Activated T-helper 1 cell treated with anti-CD3 and anti-CD28 coated beads, Interleukin-12 subunit alpha, Interleukin-12 subunit beta, Interleukin-2, Interleukin-4 antibody, amounts not matched to agents 30 ng/mL and 10 ng/mL and 1 ng/mL, durations not matched to agents 14 hours and 24 hours and 36 hours (primary cell): ENCODE measurements at regions of chr13 and their contacts with region 1.

Region 1: DNA sequence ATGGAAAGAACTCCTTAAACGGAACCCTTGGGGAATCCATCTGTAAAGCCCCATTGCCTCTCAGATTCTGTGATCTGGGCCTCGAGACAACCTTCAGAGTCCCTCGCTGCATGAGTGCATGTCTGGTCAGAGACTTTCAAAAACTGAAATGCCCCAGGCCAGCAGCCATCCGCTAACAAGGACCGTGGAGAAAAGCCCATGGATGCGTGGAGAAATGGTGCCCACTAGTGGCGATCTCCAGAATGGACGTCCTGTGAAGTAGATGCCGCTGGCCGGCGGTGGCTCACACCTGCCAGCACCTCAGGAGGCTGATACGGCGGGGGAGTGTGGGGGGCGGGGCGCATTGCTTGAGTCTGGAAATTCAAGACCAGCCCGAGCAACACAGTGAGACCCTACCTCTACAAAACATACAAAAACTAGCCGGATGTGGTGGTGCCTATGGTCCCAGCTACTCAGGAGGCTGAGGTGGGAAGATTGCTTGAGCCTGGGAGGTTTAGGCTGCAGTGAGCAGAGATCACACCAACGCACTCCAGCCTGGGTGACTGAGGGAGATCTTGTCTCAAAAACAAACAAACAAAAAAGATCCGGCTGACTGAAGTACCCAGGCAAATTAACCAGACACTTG is 7.9 kb upstream of the CDC16 start:
- DNase-seq: peak; percentile 77
- H3K4me3 Mint-ChIP-seq: peak overlapping the region; percentile 26
- H3K27ac Mint-ChIP-seq: no peak overlapping the region
- H3K4me1 Mint-ChIP-seq: peaks cover 41% of the 10 kb centered on the region
- H3K27me3 Mint-ChIP-seq: peaks cover 17% of the 10 kb centered on the region

Region 2: GRCh38 chr13:113777311-113778260 is 449.2 kb before region 1 on chr13:
- intact Hi-C with region 1: no loop called
- DNase-seq: no peak
- H3K4me3 Mint-ChIP-seq: no peak overlapping the region
- H3K27ac Mint-ChIP-seq: no peak overlapping the region
- H3K4me1 Mint-ChIP-seq: peaks cover under 1% of the 10 kb centered on the region
- H3K27me3 Mint-ChIP-seq: peaks cover 7% of the 10 kb centered on the region

Region 3: GRCh38 chr13:113816946-113817859 is 409.6 kb before region 1 on chr13:
- intact Hi-C with region 1: loop called (anchors 1 kb)
- DNase-seq: peak; percentile 79
- H3K4me3 Mint-ChIP-seq: peak overlapping the region; percentile 92
- H3K27ac Mint-ChIP-seq: peak overlapping the region; percentile 72
- H3K4me1 Mint-ChIP-seq: peaks cover 22% of the 10 kb centered on the region
- H3K27me3 Mint-ChIP-seq: no peaks in the 10 kb centered on the region

Region 4: DNA sequence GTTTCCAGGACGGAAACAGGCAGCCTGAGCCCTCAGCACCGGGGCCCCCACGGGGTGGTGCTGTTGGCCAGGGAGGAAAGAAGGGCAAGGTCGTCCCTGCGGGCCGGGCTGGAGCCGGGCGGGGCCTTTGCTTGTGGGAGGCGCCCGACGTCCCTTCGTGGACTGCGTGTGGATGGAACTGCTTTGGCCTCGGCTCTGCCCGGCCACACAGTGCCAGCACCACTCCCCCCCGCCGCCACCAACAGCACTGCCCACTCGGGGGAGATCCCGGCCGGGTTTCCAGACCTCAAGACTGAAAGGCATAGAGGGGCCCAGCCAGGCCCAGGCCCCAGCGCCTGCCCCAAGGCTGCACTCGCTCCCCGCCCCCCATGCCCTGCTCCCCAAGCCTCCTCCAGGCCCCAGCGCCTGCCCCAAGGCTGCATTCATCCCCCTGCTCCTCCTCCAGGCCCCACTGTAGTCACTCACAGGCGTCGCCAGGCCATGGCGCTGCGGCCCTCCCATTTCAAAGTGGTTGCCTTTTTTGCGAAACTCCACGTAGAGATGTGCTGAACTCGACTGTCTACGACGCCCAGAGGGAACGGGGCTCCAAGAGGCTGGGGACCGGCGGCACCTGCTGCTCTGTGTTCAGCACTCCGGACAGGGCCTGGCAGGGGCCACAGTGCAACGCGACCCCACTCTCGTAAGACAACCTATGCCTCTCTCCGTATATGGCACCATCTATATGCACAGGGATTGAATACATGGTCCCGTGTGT is 275.4 kb before region 1 on chr13:
- intact Hi-C with region 1: loop called (anchors 1 kb)
- DNase-seq: peak; percentile 7
- H3K4me3 Mint-ChIP-seq: no peak overlapping the region
- H3K27ac Mint-ChIP-seq: no peak overlapping the region
- H3K4me1 Mint-ChIP-seq: no peaks in the 10 kb centered on the region
- H3K27me3 Mint-ChIP-seq: no peaks in the 10 kb centered on the region

Region 5: DNA sequence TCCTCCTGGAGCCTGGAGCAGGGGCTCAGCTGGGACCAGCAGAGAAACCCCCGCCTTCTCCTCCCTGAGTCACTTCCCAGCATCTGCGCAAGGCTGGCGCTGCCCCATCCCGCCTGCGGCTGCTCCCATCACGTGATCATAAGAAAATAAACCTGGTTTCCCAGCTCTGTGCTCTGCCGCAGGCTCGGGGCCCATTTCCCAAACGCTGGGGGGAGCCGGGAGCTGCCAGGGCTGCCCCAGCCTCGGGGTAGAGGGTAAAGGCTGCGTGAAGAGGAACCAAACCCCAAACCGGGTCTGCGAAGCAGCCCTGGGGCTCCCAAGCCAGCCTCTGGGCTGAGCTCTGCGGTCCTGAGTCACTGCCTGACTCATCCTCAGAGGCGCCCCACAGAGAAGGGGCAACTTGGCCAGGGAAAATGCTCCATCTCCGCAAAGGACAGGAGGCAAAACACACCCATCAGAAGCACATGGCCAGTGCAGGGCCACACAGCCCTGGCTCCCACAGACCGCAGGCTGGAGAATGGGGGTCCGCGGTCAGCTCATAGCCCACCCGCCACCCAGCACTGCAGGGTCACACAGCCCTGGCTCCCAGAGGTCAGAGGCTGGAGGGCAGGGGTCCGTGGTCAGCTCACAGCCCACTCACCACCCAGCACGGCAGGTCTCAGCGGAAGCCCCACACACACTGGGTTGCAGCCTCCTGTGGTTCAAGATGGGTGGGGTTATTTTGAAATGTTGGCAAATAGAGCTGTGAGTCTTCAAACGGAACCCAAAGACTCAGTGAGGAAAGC is 161.5 kb before region 1 on chr13:
- intact Hi-C with region 1: loop called (anchors 1 kb)
- DNase-seq: peak; percentile 58
- H3K4me3 Mint-ChIP-seq: peak overlapping the region; percentile 72
- H3K27ac Mint-ChIP-seq: peak overlapping the region; percentile 91
- H3K4me1 Mint-ChIP-seq: peaks cover 51% of the 10 kb centered on the region
- H3K27me3 Mint-ChIP-seq: no peaks in the 10 kb centered on the region

Region 6: GRCh38 chr13:114128624-114129522 is 97.9 kb before region 1 on chr13:
- intact Hi-C with region 1: loop called (anchors 2 kb)
- DNase-seq: peak; percentile 84
- H3K4me3 Mint-ChIP-seq: peak overlapping the region; percentile 98
- H3K27ac Mint-ChIP-seq: peak overlapping the region; percentile 88
- H3K4me1 Mint-ChIP-seq: peaks cover 68% of the 10 kb centered on the region
- H3K27me3 Mint-ChIP-seq: peaks cover 2% of the 10 kb centered on the region